Aorta (tissue), 5 donors: ENCODE measurements at regions of chr15 and their contacts with region 1.

Region 1: DNA sequence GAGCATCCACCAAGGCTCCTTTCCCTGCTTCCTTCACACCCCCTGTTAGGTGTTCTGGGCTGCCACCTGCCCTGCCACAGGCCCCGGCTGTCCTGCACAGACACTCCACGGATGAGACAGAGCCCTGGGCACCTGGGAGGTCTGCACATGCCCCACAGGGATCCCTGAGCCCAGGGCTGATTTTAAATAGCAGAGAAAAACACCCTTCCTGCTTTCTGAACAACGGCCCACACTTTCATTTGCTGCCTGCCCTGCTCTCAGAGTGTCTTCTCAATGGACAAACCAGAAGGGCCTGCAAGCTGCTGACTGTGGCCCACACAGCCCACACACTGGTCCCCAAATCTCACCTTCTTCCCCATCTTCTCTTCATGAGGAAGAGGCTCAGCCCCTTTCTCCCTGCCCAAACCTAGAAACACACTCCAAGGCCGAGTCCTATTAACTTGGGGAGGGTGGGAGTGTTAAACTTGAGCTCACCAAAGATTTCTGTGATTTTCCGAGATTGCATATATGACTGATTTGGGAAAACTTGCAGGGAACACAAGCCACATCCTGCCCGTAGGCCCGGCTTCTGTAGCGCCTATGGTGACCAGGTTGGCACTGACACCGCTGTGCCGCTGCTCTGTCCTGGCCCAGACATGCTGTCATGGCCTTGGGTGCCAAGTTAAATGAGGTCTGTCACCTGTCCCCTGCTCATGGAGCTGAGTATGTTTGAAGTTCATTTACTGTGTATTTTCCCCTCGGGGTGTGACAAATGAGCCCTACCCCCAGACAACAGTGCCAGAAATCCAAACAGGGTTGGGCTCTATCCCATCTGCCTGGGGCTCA is 47.2 kb upstream of the KLF13 start:
- DNase-seq: peak in 1 of 2 donors; percentile 36
- ATAC-seq: peak; percentile 9
- H3K4me3 ChIP-seq: no peak overlapping the region
- H3K27ac ChIP-seq: no peak overlapping the region
- H3K4me1 ChIP-seq: no peaks in the 10 kb centered on the region
- H3K27me3 ChIP-seq: no peaks in the 10 kb centered on the region

Region 2: DNA sequence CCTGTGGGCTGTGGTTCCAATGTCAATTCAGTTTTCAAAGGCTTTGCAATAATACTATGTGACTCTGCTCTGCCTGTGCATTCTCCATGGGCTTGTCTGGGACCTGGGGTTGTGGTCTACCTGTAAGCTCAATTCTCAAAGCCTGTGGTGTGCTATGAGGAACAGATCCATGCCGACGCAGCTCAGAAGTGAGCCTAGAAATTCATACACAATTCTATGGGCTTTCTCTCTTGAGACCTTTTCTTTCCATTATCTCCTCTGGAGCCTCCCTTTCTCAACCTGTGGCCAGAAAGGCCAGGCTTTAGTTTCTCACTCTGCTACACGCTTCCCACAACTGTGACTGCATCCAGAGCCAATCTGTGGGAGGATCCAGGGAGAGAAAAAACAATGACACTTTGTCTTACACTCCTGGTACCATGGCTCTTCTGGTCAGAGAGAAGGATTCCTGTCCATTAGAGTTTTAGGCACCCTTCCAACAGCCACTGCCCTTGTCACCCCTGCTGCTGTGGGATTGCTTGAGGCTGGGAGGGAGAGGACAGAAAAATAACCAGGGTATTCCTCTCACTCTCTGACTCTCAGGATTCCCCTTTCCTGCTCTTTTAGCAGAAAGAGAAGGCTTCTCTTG is 13.1 kb after region 1 on chr15:
- intact Hi-C with region 1: loop called in 1 of 2 experiments (anchors 2 kb)
- DNase-seq: no peak
- ATAC-seq: no peak
- H3K4me3 ChIP-seq: no peak overlapping the region
- H3K27ac ChIP-seq: no peak overlapping the region
- H3K4me1 ChIP-seq: no peaks in the 10 kb centered on the region
- H3K27me3 ChIP-seq: no peaks in the 10 kb centered on the region